Activated CD4-positive, alpha-beta T cell treated with anti-CD3 and anti-CD28 coated beads for 36 hours (primary cell): ENCODE measurements at regions of chr6 and their contacts with region 1.

Region 1: DNA sequence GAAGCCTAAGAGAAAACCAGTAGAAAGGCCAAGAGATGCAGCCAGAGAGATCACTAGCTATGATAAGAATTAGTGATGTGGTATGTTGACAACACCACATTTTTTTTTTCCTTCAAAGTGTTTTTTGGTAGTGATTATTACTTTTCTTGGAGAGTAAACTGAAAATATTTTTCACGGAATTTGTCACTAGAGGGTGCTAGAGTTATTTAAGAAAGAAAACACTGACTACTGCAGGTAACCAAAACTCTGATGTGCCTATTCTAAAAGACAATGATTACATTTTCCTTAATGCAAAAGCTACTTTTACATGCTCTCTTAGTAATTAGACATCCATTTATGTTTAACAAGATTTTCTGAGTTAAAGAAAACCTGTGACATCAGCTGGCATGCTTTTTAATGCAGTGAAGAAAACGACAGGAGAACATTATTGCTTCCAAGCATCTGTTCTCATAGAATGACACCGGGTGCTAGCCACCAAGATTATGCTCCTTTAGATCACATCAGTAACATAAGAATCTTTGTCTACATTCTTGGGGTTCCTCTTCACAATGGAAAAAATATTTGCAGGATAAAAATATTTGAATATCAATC is 28.8 kb downstream of the RWDD2A start:
- DNase-seq: no peak
- ATAC-seq: no peak
- H3K4me3 Mint-ChIP-seq: no peak overlapping the region
- H3K27ac Mint-ChIP-seq: no peak overlapping the region
- H3K4me1 Mint-ChIP-seq: no peaks in the 10 kb centered on the region
- H3K27me3 Mint-ChIP-seq: no peaks in the 10 kb centered on the region

Region 2: GRCh38 chr6:83199863-83200225 is 22.1 kb before region 1 on chr6:
- CTCF ChIA-PET with region 1: interaction called, 10 read pairs
- POLR2A ChIA-PET with region 1: no interaction called
- intact Hi-C with region 1: no loop called
- DNase-seq: no peak
- ATAC-seq: no peak
- H3K4me3 Mint-ChIP-seq: no peak overlapping the region
- H3K27ac Mint-ChIP-seq: no peak overlapping the region
- H3K4me1 Mint-ChIP-seq: peaks cover 5% of the 10 kb centered on the region
- H3K27me3 Mint-ChIP-seq: no peaks in the 10 kb centered on the region

Region 3: DNA sequence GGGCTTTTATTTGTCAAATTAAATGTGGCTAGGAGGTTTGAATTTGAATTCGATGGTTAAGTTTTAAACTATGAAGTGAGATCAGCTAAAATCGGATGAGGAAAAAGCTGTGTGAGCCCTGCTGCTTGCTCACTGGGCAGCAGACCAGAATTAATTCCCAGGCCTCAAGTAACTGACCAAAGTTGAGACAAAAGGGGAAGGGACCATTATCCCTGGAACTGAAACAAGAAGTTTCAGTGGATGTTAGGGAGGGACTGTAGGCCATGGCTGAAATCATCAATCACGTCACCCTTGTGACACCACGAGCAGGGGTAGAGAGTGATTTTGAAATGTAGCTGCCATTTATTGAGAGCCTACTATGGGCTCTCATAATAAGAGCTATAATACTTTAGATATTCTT is 283.4 kb after region 1 on chr6:
- CTCF ChIA-PET with region 1: interaction called, 15 read pairs
- POLR2A ChIA-PET with region 1: no interaction called
- intact Hi-C with region 1: no loop called
- DNase-seq: no peak
- ATAC-seq: no peak
- H3K4me3 Mint-ChIP-seq: no peak overlapping the region
- H3K27ac Mint-ChIP-seq: no peak overlapping the region
- H3K4me1 Mint-ChIP-seq: no peaks in the 10 kb centered on the region
- H3K27me3 Mint-ChIP-seq: peaks cover 7% of the 10 kb centered on the region

Region 4: GRCh38 chr6:83514866-83515466 is 293.0 kb after region 1 on chr6:
- CTCF ChIA-PET with region 1: interaction called, 57 read pairs
- POLR2A ChIA-PET with region 1: no interaction called
- intact Hi-C with region 1: loop called (anchors 1 kb)
- DNase-seq: peak; percentile 23
- ATAC-seq: no peak
- H3K4me3 Mint-ChIP-seq: no peak overlapping the region
- H3K27ac Mint-ChIP-seq: no peak overlapping the region
- H3K4me1 Mint-ChIP-seq: peaks cover 4% of the 10 kb centered on the region
- H3K27me3 Mint-ChIP-seq: peaks cover 30% of the 10 kb centered on the region

Region 5: DNA sequence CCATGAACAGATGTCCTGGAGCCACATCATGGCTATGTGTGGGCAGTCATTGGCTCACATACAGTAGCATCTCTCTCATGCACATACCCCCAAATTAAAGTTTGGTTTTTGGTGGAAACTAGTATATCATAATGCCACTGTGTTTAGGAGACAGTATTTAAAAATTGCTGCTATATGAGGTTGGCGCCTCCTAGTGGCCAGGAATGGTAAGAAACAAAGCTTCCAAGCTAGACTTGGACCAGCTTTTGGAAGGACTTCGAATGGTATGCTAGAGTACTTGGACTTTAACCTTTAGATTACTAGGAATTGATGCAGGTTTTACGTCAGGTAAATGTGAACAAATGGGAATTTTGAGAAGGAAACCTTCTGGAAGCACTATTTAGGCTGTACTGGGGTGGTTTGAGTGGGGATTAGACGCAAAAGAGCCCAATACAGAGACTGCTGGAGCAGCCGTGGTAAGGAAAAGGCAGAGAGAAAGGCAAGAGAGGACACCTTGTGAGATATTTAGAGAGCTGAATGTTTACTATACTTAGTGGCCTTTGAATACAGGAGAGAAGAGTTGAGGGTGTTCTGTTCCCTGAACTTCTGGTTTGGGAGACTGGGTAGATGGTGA is 314.2 kb after region 1 on chr6:
- CTCF ChIA-PET with region 1: interaction called, 6 read pairs
- POLR2A ChIA-PET with region 1: no interaction called
- intact Hi-C with region 1: loop called in 1 of 2 experiments (anchors 1 kb)
- DNase-seq: peak; percentile 69
- ATAC-seq: peak; percentile 44
- H3K4me3 Mint-ChIP-seq: no peak overlapping the region
- H3K27ac Mint-ChIP-seq: no peak overlapping the region
- H3K4me1 Mint-ChIP-seq: no peaks in the 10 kb centered on the region
- H3K27me3 Mint-ChIP-seq: no peaks in the 10 kb centered on the region